ENCODE measurements at regions of chr7 and their contacts with region 1.

Region 1: GRCh38 chr7:47945261-47946001 is 2.8 kb downstream of the PKD1L1 start:
- DNase-seq: peak; percentile 77
- ATAC-seq: peak; percentile 53
- H3K4me3 Mint-ChIP-seq: no peak overlapping the region
- H3K27ac Mint-ChIP-seq: no peak overlapping the region
- H3K4me1 Mint-ChIP-seq: peaks cover 25% of the 10 kb centered on the region
- H3K27me3 Mint-ChIP-seq: no peaks in the 10 kb centered on the region
- CTCF ChIP-seq: no peak; the same call in none of the 2 replicates

Region 2: GRCh38 chr7:47852330-47853245 is 92.8 kb before region 1 on chr7:
- CTCF ChIA-PET with region 1: interaction called, 14 read pairs
- POLR2A ChIA-PET with region 1: no interaction called
- DNase-seq: peak; percentile 51
- ATAC-seq: peak; percentile 96
- H3K4me3 Mint-ChIP-seq: no peak overlapping the region
- H3K27ac Mint-ChIP-seq: no peak overlapping the region
- H3K4me1 Mint-ChIP-seq: no peaks in the 10 kb centered on the region
- H3K27me3 Mint-ChIP-seq: no peaks in the 10 kb centered on the region; the same call in 1 of the 2 replicates
- CTCF ChIP-seq: no peak

Region 3: DNA sequence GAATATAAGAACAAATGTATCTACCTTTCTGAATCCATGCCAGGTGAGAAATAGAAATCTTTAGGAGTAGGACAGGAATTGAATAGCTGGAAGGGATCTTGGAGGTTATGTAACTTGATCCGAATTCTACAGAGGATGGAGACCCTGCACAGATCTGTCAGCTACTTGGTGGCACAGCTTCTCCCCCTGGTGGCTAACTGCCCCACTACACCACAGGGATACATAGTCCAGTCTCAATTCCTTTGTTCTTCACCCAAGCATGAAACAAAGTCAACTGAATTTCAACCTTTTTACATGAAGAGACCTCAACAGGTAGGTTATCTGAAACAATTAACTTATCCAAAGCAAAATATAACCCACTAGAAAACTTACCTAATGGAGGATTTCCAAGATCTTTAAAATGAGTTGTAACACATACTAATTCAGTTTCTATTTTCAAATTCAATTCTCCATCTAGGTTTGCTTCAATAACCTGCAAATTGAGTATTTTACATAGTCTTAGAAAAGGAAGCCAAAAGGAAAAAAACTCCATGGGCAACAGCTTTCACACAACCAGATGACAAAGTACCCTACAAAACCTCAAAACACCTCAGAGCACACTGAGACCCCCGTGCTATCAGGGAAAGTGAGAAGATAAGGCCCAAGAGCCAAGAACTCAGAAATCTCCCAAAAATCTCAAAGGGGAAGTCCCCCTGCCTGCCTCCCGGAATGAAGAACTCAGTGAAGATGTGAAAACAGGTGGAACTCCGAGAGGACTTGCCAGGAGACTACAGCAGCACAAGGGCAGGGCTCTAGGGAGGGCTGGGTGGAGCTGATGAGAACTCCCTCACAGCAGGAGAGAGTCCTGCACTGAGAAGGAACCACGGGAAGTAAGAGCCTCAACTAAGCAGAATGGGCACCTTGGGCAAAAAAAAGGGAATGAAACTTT is 23.7 kb after region 1 on chr7:
- CTCF ChIA-PET with region 1: interaction called, 25 read pairs
- POLR2A ChIA-PET with region 1: no interaction called
- DNase-seq: peak; percentile 86
- ATAC-seq: peak; percentile 99
- H3K4me3 Mint-ChIP-seq: no peak overlapping the region; the same call in 1 of the 2 replicates
- H3K27ac Mint-ChIP-seq: peak overlapping the region; percentile 90
- H3K4me1 Mint-ChIP-seq: peaks cover 17% of the 10 kb centered on the region
- H3K27me3 Mint-ChIP-seq: no peaks in the 10 kb centered on the region
- CTCF ChIP-seq: peak; percentile 80

Measured in WTC11 (cell line).